ENCODE measurements at regions of chr15 and their contacts with region 1.

Region 1: DNA sequence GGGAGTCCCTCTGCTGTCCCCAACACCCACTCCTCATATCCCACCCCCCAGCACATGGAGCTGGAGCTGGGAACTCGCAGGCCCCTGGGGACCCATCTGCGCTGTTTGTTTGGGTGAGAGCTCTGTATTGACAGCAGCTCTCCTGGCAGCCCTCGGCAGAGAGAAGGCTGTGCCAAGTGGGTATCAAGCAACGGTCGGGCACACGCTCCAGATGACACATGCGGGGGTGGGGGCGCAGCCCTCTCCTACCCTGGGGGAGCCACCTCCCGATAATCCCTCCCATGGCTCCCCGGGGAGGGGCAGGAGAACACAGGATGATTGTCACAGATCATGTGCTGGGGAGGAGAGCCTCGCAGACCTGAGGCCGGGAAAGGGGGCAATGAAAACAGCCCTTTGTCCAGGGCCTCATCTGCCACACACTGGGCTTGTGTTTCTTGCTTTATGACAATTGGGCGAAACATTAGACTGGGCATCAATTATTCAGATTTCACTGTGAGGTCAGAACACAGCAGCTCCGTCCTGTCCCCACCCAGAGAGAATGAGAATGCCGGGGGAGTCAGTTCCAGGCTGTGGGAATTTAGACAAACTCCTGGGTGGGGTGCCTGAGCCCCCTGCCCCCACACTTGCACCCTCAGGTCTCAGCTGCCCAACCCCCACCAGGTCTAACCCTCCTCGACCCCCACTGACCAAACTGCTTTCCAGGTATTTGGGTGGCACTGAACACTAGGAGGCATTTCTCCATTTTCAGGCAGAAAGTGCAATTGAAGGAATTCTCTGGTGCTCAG is 46.4 kb upstream of the KLF13 start:
- DNase-seq: peak; percentile 77 to 98 (median 90)

Region 2: GRCh38 chr15:31223478-31224350 is 56.5 kb before region 1 on chr15:
- intact Hi-C with region 1: loop called (anchors 5 kb)
- DNase-seq: peak in 3 of 10 donors; percentile 25 to 78 (median 30)

Region 3: DNA sequence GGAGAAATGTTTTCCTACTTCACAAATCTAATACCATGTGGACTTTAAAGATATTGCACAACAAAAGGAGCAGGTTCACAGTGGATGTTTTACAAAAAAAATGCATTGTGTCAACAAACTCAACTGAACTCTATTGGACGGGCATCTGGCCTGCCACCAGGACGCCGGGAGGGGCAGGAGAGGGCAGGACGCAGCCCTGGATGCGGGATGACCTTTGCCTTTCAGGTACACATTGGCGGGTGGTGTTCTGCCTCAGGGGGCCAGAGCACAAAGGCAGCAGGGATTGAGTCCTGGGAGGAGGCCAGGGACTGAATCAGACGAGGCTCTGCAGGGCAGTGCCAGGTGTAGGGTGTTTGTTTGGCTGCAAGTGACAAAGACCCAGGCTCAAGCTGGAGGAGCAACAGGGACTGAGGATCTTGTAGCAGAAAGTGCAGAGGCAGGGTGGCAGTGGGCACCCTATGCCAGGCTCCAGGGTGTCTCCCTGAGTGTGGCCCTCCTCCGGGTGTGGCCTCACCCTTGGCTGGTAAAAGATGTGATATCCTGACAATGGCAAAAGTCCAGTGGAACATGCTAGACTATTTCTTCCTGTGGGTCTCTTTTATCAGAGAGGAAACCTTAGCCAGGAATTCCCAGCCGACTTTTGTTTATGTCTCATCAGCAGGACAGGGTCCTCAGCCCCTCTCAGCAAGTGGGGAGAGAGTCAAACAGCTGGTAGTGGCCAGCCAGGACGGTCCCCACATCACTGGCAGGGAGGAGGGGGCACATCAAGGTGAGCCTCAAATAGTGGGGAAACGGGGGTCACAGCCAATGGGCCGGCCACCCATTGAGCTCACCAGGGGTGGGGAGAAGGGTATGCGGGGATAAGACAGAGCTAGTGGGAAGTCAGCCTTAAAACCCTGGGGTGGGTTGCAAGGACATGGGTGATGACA is 16.7 kb after region 1 on chr15:
- intact Hi-C with region 1: loop called (anchors 1 kb)
- DNase-seq: peak in 2 of 10 donors; percentile 48 to 87

Region 4: GRCh38 chr15:31326156-31326732 is 46.0 kb after region 1 on chr15:
- intact Hi-C with region 1: loop called (anchors 1 kb)
- DNase-seq: peak; percentile 97 to 100 (median 98)

Region 5: DNA sequence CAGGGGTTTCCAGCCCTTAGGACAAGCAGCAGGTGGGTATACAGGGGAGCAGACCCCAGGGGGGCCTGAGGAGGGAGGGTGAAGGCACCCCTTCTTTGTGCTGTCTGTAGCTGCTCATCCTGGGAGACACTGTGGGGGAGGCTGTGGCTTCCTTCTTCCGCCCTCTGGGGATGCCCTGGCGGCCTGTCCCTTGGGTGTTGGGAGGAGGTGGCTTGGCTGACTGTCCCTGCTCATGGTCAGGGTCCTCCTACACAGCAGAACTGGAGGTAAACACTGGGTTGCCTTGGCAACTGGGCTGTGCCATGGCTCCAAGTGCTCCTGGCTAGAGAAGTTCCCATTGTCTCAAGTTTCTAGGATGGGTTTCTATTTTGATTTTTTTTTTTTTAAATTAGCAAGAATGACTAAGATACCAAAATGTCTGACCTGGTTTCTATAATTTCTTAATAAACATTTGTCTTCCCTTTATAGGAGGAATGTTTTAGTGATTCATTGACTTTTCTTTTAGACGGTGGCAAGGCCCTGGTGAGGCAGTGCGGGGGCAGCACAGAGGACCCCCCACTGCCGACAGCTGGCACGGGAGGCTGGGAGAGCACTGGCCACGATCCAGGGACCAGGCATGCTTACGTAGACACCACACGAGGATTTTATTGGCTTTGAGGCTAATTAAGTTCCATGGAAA is 58.8 kb after region 1 on chr15:
- intact Hi-C with region 1: no loop called
- DNase-seq: peak in 6 of 10 donors; percentile 49 to 91 (median 69)

Region 6: GRCh38 chr15:31893780-31894179 is 613.5 kb after region 1 on chr15:
- intact Hi-C with region 1: no loop called
- DNase-seq: no peak